ENCODE measurements at regions of chr3 and their contacts with region 1.

Region 1: GRCh38 chr3:49839193-49839809 is 17.1 kb downstream of the TRAIP start:
- DNase-seq: peak; percentile 69
- H3K4me3 Mint-ChIP-seq: no peak overlapping the region
- H3K27ac Mint-ChIP-seq: no peak overlapping the region
- H3K4me1 Mint-ChIP-seq: no peaks in the 10 kb centered on the region
- H3K27me3 Mint-ChIP-seq: no peaks in the 10 kb centered on the region

Region 2: DNA sequence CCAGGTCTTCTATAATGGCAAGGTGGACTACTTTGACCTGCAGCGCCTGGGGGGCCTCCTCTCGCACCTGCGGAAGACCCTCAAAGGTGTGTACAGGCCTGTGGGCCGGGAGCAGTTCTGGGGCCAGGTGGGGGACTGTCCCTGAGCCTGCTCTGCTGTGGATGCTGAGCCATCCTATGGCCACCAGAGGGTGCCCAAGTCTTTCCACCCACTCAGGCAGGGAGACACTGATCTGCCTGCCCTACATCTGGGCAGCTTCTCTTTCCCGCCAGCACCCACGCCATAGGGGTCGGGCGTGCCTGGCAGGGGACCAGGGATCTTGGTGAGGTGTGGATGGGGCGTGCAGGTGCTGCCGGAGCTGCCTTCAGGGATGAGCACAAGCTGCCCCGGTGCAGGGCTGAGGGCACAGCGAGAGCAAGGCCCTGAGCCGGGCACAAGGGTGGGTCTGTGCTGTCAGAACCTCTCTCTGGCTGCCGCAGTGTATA is 135.8 kb before region 1 on chr3:
- intact Hi-C with region 1: loop called (anchors 1 kb)
- DNase-seq: peak; percentile 57
- H3K4me3 Mint-ChIP-seq: no peak overlapping the region
- H3K27ac Mint-ChIP-seq: no peak overlapping the region
- H3K4me1 Mint-ChIP-seq: no peaks in the 10 kb centered on the region
- H3K27me3 Mint-ChIP-seq: no peaks in the 10 kb centered on the region

Region 3: DNA sequence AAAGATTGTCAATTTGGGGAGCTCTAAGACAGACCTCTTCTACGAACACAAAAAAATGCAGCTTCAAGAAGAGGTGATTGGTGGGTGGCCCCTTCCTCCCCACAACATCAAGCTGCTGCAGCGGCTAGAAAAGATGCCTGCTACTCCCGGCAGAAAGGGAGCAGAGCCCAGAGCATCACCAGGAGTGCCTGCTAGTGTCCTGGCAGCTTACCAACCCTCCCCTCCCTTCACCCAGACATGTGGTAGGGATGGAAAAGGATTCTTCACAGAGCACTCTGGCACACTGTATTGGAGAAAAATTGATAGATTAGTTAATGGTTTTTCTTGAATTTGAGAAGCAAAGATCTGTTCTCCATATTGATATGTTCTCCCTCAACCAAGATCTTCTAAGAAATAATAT is 63.8 kb before region 1 on chr3:
- intact Hi-C with region 1: no loop called
- DNase-seq: no peak
- H3K4me3 Mint-ChIP-seq: no peak overlapping the region
- H3K27ac Mint-ChIP-seq: no peak overlapping the region
- H3K4me1 Mint-ChIP-seq: peaks cover 16% of the 10 kb centered on the region
- H3K27me3 Mint-ChIP-seq: no peaks in the 10 kb centered on the region

Measured in activated T-helper 1 cell treated with anti-CD3 and anti-CD28 coated beads, Interleukin-12 subunit alpha, Interleukin-12 subunit beta, Interleukin-2, Interleukin-4 antibody, amounts not matched to agents 30 ng/mL and 10 ng/mL and 1 ng/mL, durations not matched to agents 14 hours and 24 hours and 36 hours (primary cell).